Activated CD4-positive, alpha-beta T cell treated with anti-CD3 and anti-CD28 coated beads, Interleukin-2, amount 10 ng/mL, durations not matched to agents 24 days and 14 days (primary cell): ENCODE measurements at regions of chr7 and their contacts with region 1.

Region 1: GRCh38 chr7:44847508-44847920 is 373 bp downstream of the H2AZ2 start:
- DNase-seq: peak; percentile 95
- H3K4me3 Mint-ChIP-seq: peak overlapping the region; percentile 99
- H3K27ac Mint-ChIP-seq: peak overlapping the region; percentile 98
- H3K4me1 Mint-ChIP-seq: peaks cover 52% of the 10 kb centered on the region
- H3K27me3 Mint-ChIP-seq: peaks cover 2% of the 10 kb centered on the region

Region 2: GRCh38 chr7:44581879-44582603 is 265.5 kb before region 1 on chr7 and contains the start of gene TMED4:
- intact Hi-C with region 1: loop called (anchors 1 kb)
- DNase-seq: peak; percentile 100
- H3K4me3 Mint-ChIP-seq: peak within 1 kb of the TSS; percentile 92
- H3K27ac Mint-ChIP-seq: peak within 1 kb of the TSS; percentile 92
- H3K4me1 Mint-ChIP-seq: peaks cover 35% of the 10 kb centered on the region
- H3K27me3 Mint-ChIP-seq: peaks cover 4% of the 10 kb centered on the region
- total RNA-seq, gene TMED4: 78.4 and 80.2 TPM in 2 replicates

Region 3: DNA sequence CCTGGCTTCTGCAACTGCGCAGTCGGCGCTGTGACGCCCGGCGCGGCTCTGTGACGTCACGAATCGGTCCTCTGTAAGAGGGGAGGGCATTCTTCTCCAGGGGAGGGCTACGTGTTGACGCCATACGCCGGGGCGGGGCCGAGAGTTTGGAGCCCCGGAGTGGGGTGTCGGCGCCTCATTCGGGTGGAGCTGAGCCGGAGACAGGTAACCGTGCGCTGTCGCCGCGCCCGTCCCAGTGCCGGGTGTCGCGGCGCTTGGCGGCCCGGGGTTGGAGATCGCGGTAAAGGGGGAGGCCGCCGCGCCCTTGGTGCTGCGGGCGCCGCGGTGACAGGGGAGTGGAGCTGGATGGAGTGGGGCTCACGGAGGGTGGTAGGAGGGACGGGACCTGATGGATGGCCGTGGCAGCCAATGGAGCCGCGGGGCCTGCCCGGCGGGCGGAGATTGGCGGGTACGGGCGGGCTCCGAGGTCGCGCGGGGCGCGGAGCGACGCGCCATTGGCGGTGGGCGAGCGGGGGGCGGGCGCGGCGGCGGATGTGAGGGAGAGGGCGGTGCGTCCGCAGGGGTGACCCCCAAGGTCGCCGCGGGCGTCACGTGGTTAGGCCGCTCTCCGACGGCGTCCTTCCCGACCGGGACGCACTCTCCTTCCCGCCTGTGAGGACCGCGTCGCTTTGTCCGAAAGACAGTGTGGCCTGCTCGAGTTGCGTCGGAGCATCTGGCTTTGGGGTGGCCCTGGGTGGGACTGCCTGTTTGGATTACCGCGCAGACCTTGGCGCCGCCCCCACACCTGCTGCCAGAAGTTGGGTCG is 240.9 kb before region 1 on chr7 and contains the start of gene OGDH:
- intact Hi-C with region 1: loop called (anchors 1 kb)
- DNase-seq: peak; percentile 100
- H3K4me3 Mint-ChIP-seq: peak within 1 kb of the TSS; percentile 99
- H3K27ac Mint-ChIP-seq: peak within 1 kb of the TSS; percentile 100
- H3K4me1 Mint-ChIP-seq: peaks cover 30% of the 10 kb centered on the region
- H3K27me3 Mint-ChIP-seq: peaks cover 11% of the 10 kb centered on the region
- total RNA-seq, gene OGDH: 99.5 and 102 TPM in 2 replicates

Region 4: DNA sequence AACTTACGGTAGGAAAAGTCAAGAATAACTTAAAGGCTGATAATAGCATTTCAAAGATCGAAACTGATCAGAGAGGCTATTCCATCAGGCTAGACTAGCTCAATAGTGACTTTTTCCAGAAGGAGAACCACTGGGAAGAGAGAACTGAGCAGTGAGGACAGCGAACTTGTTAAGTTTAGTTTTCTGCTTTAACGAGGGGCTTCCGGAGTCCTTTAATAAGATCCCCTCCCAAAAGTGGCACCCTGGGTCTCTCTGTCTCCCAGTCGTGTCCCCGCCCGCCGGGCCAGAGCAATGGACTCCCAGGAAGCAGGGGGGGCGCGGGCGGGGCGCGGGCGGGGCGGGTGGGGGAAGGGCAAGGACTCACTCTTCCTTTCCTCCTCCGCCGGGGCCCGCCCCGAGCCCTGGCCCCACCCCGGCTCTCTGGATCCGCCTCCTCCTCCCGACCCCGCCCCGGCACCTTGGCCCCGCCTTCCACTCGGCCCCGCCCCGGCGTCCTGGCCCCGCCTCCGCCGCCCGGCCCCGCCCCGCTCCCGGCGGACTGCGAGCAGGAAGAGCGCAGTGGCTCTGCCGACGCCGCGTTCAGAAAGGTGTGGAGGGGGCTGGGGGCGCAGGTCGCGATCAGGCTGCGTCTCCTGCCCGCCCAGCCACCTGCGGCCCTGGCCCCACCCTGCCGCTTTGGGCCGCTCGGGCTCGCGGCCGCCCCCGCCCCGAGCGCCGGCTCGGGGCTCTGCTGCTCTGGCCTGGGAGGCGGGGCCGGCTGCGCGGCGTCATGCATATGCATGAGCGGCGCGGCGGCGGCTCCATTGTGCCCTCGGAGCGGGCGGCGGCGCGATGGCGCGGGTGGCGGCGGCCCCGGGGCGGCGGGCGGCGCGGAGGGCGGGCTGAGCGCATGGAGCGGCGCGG is 99.2 kb before region 1 on chr7 and contains the start of gene ZMIZ2:
- intact Hi-C with region 1: loop called (anchors 1 kb)
- DNase-seq: peak; percentile 97
- H3K4me3 Mint-ChIP-seq: peak within 1 kb of the TSS; percentile 93
- H3K27ac Mint-ChIP-seq: peak within 1 kb of the TSS; percentile 89
- H3K4me1 Mint-ChIP-seq: peaks cover 33% of the 10 kb centered on the region
- H3K27me3 Mint-ChIP-seq: no peaks in the 10 kb centered on the region
- total RNA-seq, gene ZMIZ2: 130 and 133 TPM in 2 replicates

Region 5: DNA sequence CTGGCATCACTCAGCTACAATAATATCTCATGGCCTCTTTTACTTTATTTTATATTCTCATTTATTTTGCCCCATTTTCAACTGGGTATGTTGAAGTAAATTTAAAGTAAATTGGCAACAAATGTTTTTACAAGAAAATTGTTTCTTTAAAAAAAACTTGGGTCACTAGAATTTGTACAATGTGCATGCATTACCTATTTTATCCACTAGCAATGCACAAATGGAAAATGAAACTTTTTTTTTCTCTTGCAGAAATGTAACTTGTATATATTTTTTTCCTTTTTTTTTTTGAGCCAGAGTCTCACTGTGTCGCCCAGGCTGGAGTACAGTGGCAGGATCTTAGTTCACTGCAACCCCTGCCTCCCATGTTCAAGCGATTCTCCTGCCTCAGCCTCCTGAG is 10.6 kb after region 1 on chr7:
- intact Hi-C with region 1: loop called (anchors 1 kb)
- DNase-seq: no peak
- H3K4me3 Mint-ChIP-seq: no peak overlapping the region
- H3K27ac Mint-ChIP-seq: no peak overlapping the region
- H3K4me1 Mint-ChIP-seq: peaks cover 15% of the 10 kb centered on the region
- H3K27me3 Mint-ChIP-seq: peaks cover 3% of the 10 kb centered on the region

Region 6: DNA sequence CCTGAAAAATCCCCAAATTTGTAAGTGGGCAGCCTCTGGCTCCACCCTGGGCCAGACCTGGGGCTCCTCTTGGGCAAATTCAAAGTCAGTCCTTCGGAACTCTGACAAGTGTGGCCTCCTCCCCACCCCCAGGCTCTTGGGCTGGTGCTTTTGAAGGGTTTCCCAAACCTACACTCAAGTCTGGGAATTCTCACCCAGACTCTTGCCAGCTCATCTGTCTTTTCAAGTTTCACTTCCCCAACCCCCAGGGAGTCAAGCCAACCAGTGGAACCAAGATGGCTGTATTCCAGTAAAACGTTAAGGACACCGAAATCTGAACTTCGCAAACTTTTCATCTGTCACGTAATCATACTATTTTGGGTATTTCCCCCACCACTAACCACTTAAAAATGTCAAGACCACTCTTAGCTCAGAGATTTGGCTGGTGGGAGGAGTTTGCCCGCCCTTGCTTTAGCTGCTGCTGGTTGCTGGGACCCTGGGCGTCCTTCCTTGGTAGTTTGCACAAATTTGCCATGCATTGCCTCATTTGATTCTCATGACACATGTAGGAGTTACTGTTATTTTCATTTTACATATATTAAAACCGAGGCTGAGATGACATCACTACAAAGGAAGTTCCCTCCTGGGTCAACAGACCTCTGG is 133.0 kb after region 1 on chr7:
- intact Hi-C with region 1: loop called (anchors 1 kb)
- DNase-seq: peak; percentile 89
- H3K4me3 Mint-ChIP-seq: peak overlapping the region; percentile 93
- H3K27ac Mint-ChIP-seq: peak overlapping the region; percentile 90
- H3K4me1 Mint-ChIP-seq: peaks cover 63% of the 10 kb centered on the region
- H3K27me3 Mint-ChIP-seq: no peaks in the 10 kb centered on the region

Region 7: DNA sequence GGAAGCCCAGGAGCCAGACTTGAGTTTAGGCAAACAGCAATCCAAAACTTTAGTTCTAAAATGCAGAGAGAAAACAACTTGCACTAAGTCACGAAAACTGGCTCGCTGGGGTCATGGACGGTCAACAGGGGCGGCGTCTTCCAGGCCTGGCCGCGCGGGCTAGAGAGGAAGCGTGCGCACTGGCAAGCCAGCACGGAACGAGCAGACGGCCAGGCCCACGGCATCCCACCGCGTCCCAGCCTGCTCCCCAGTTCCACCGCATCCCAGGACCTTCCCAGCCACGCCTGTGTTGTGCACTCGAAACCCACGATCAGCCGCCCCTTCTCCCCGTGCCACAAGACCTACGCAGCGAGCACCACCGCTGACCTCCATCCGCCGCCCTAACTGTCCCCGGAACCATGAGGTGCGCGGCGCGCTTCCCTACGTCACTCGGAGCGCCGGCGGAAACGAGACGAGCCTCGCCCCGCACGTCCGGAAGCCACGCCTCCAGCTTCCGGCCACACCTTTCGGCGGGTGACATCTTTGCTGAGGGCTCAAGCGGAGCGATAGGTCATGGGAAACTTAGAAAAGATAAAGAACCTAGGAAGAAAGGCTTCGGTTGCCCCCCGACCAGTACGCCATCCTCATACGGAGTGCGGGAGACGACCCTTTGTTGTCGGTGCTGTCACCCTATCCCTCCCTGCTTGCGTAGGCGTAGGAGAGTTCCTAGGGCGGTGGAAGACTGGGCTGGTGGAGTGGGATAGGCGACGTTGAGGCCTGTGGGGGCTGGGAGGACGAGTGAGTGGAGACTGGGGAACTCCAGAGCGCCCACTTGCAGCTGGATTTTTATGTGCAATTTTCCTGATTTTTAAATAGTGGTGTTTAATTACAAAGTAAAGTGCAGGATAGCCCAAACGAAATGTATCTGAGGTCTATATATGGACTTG is 264.0 kb after region 1 on chr7 and contains the start of gene TBRG4:
- intact Hi-C with region 1: loop called (anchors 2 kb)
- DNase-seq: peak; percentile 99
- H3K4me3 Mint-ChIP-seq: peak within 1 kb of the TSS; percentile 98
- H3K27ac Mint-ChIP-seq: peak within 1 kb of the TSS; percentile 99
- H3K4me1 Mint-ChIP-seq: peaks cover 35% of the 10 kb centered on the region
- H3K27me3 Mint-ChIP-seq: peaks cover 21% of the 10 kb centered on the region
- total RNA-seq, gene TBRG4: 192 and 198 TPM in 2 replicates